Ovary (tissue), 10 donors: ENCODE measurements at regions of chr22 and their contacts with region 1.

Region 1: DNA sequence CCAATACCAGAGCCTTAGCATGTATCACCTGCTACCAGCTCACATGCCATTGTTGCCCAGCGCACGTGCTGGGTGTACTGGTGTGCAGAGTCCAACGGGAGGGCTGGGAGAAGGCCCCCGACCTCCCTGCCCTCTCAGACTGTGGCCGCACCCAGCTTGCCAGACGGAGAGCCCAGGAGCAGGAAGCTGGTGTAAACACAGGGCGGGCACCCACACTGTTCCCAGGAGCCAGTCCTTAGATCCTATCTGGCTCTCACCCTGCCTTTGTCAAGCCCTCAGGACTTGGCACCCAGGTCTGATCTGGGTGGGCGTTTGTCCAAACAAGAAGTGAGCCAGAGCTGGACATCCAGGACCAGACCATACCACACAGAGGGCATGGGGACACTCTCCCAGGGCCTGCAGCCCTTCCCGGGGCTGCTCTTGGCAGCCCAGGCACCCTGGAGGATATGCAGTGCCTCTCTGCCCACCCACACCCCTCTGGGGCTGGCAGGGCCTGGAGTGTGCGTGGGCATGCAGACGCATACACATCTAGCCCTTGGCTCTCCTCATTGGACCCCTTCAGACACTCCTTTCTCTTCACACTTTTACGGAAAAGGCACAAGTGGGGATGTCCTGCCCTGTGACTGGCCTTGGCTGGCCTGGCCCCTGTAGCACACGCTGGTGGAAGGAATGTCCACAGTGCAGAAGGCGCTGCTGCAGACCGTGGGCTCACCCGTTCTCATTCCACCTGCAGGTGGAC is 19.9 kb upstream of the CLDN5 start:
- DNase-seq: no peak
- H3K4me3 ChIP-seq: no peak overlapping the region
- H3K27ac ChIP-seq: no peak overlapping the region
- H3K4me1 ChIP-seq: no peaks in the 10 kb centered on the region
- H3K27me3 ChIP-seq: no peaks in the 10 kb centered on the region
- CTCF ChIP-seq: no peak
- EP300 ChIP-seq: no peak
- POLR2A ChIP-seq: no peak

Region 2: DNA sequence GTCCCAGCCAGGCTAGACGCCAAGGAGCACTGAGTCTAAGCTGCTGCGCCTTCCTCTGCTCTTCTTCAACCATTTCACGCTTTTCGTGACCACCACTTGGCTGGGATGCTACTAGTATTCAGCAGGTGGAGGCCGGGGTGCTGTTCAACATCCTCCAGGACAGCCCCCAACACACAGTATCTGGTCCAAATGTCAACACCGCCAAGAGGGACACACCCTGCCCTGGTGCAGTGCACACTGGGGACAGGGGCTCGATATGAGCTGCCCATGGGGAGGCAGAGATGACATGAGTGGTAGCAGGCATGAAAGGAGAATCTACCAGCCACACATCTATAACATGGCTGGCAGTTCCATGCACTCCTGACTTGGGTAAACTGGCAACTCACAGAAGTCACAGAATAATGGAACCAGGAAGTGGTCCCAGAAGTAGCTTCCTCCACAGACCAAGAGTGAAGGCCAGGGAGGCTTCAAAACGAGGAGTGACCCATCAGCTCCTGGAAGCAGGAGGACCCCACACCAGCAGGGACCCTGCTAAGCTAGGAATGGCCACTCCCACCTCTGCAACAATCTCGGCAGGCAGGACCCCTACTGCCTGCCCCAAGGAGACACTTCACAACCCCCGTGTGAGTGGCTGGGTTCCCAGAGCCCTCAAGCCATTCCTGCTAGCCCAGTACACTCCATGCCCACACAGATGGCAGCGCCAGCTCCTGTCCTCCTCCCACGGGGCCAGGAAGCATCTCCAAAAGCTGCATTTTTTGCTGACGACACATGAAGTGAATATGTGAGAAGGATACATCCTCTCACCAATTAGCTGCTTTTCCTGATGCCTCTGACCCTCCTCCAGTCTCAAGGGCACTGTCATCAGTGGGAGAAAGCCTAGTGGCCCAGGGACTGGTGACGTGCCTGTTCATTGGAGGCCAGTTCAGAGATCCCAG is 500.8 kb before region 1 on chr22:
- intact Hi-C with region 1: loop called in 1 of 4 experiments (anchors 10 kb)
- DNase-seq: peak in 1 of 5 donors; percentile 19
- H3K4me3 ChIP-seq: no peak overlapping the region
- H3K27ac ChIP-seq: no peak overlapping the region
- H3K4me1 ChIP-seq: no peaks in the 10 kb centered on the region
- H3K27me3 ChIP-seq: no peaks in the 10 kb centered on the region
- CTCF ChIP-seq: no peak
- EP300 ChIP-seq: no peak
- POLR2A ChIP-seq: no peak

Region 3: DNA sequence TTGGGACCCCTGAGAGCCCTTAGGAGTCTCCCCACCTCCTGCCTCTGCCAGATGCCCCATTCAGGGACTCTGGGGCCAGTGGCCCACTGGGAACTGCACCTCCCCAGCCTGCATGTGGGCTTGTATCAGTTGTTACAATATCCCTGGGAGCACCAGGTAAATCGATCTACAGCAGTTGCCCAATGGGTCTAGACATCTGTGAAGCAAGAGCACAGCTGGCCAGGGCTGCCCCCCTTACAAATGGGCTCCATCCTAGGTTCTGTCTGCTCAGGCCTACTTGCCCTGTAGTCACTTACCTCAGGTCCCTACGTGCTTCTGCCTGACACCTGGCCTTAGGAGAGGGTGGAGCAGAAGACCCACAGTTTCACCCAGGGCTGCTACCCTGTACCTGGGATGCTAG is 175.3 kb before region 1 on chr22:
- intact Hi-C with region 1: no loop called
- DNase-seq: no peak
- H3K4me3 ChIP-seq: no peak overlapping the region
- H3K27ac ChIP-seq: no peak overlapping the region
- H3K4me1 ChIP-seq: no peaks in the 10 kb centered on the region
- H3K27me3 ChIP-seq: no peaks in the 10 kb centered on the region
- CTCF ChIP-seq: no peak
- EP300 ChIP-seq: no peak
- POLR2A ChIP-seq: no peak

Region 4: DNA sequence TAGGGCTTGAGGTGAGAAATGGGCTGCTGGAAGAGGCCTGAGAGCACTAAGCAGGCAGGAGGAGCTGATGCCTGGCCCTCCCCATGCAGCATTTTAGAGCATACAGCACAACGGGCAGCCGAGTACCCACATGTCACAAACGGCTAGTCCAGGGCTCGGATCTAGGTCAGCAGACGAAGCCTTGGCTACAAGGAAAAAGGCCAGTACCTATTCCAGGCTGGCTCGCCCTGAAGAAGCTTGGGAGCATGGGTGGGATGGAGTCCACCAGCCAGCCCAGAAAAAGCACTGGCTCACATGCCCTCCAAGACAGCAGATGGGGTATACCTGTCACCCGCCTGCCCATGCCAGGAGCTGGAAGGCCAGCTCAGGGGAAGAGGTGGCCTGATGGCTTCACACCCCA is 74.7 kb before region 1 on chr22:
- intact Hi-C with region 1: no loop called
- DNase-seq: no peak
- H3K4me3 ChIP-seq: no peak overlapping the region
- H3K27ac ChIP-seq: no peak overlapping the region
- H3K4me1 ChIP-seq: no peaks in the 10 kb centered on the region
- H3K27me3 ChIP-seq: no peaks in the 10 kb centered on the region
- CTCF ChIP-seq: no peak
- EP300 ChIP-seq: no peak
- POLR2A ChIP-seq: no peak

Region 5: GRCh38 chr22:19479357-19480172 is 64.6 kb before region 1 on chr22 and contains the start of gene CDC45:
- intact Hi-C with region 1: no loop called
- DNase-seq: peak; percentile 93 to 95 (median 94)
- H3K4me3 ChIP-seq: peak within 1 kb of the TSS; percentile 76
- H3K27ac ChIP-seq: peak within 1 kb of the TSS; percentile 79 to 93
- H3K4me1 ChIP-seq: peaks cover 7% of the 10 kb centered on the region
- H3K27me3 ChIP-seq: no peaks in the 10 kb centered on the region
- CTCF ChIP-seq: peak in 1 of 3 donors; percentile 17
- EP300 ChIP-seq: no peak
- POLR2A ChIP-seq: no peak
- total RNA-seq, gene CDC45: 0.87 to 2.2 (median 1.1) TPM in 4 of 7 donors, not detected in the others